ENCODE measurements at regions of chrX and their contacts with region 1.

Region 1: GRCh38 chrX:33336783-33337182 is 125.4 kb upstream of the DMD start:
- DNase-seq: no peak
- ATAC-seq: peak; percentile 62 to 84 (median 70)
- H3K4me3 ChIP-seq: peak overlapping the region; percentile 58
- H3K27ac ChIP-seq: no peak overlapping the region
- H3K4me1 ChIP-seq: no peaks in the 10 kb centered on the region
- H3K27me3 ChIP-seq: peaks cover 0 to 3% (median 0%) of the 10 kb centered on the region in 3 donors
- CTCF ChIP-seq: peak; percentile 51

Region 2: GRCh38 chrX:32530802-32531403 is 805.9 kb before region 1 on chrX:
- intact Hi-C with region 1: loop called in 1 of 2 experiments (anchors 5 kb)
- DNase-seq: no peak
- ATAC-seq: peak in 1 of 4 donors; percentile 35
- H3K4me3 ChIP-seq: no peak overlapping the region
- H3K27ac ChIP-seq: no peak overlapping the region
- H3K4me1 ChIP-seq: no peaks in the 10 kb centered on the region
- H3K27me3 ChIP-seq: no peaks in the 10 kb centered on the region
- CTCF ChIP-seq: peak; percentile 62

Region 3: DNA sequence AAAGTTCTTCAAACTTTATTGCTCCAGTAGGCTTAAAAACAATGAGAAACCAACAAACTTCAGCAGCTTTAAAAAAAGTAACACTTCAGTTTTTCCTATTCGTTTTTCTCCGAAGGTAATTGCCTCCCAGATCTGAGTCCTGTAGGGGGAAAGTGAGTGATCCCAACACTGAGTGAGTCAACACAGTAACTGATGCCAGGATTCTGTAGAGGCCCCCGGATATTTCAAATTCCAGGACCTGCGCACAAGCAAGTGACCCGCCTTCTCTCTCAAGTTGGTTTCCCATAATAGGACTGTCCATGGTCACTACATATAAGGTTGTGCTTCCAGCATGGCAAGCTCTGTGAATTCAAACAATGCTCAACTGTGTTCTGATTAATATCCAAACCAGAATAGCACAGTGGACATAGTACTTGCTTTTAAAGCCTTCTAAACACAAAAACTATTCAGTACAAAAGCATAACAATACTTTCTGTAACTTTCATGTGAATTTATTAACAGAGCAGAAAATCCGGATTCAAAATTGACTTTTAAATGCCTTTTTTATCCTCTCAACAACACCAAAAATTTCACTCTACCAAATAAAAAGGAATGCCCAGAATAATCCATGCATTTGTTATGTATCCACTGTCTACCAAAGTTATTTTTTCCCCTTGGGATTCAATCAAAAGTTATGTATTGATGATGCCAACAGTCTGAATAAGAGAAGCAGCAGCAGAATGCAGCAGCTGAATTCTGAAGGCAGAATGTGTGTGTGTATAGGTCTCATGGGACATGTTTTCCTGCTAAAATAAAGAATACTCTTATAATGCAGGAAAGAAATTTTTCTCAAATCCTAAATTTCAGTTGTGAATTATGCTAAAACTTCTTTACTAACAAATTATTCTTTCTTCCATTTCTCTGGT is 125.2 kb before region 1 on chrX and contains the start of gene DMD:
- intact Hi-C with region 1: loop called in 1 of 2 experiments (anchors 5 kb)
- DNase-seq: peak; percentile 36 to 68
- ATAC-seq: peak; percentile 84 to 97 (median 92)
- H3K4me3 ChIP-seq: peak within 1 kb of the TSS; percentile 64
- H3K27ac ChIP-seq: peak within 1 kb of the TSS; percentile 85
- H3K4me1 ChIP-seq: no peaks in the 10 kb centered on the region
- H3K27me3 ChIP-seq: no peaks in the 10 kb centered on the region
- CTCF ChIP-seq: no peak
- total RNA-seq, gene DMD: 86.5 to 170 (median 120) TPM

Measured in psoas muscle (tissue), 8 donors.